Caco-2 (cell line): ENCODE measurements at regions of chr11 and their contacts with region 1.

Region 1: GRCh38 chr11:44243595-44244343 is 66.2 kb downstream of the ALX4 start:
- DNase-seq: peak; percentile 89 to 93
- H3K4me3 ChIP-seq: no peak overlapping the region
- H3K4me3 Mint-ChIP-seq: peak overlapping the region; percentile 64
- H3K27ac Mint-ChIP-seq: peak overlapping the region; percentile 91
- H3K4me1 ChIP-seq: peaks cover 45% of the 10 kb centered on the region
- H3K4me1 Mint-ChIP-seq: peaks cover 26% of the 10 kb centered on the region
- H3K27me3 ChIP-seq: no peaks in the 10 kb centered on the region
- H3K27me3 Mint-ChIP-seq: no peaks in the 10 kb centered on the region
- CTCF ChIP-seq: no peak

Region 2: GRCh38 chr11:43765194-43765593 is 478.6 kb before region 1 on chr11:
- CTCF ChIA-PET with region 1: no interaction called
- POLR2A ChIA-PET with region 1: no interaction called
- intact Hi-C with region 1: loop called (anchors 10 kb)
- DNase-seq: no peak
- H3K4me3 ChIP-seq: no peak overlapping the region
- H3K4me3 Mint-ChIP-seq: no peak overlapping the region
- H3K27ac Mint-ChIP-seq: no peak overlapping the region
- H3K4me1 ChIP-seq: no peaks in the 10 kb centered on the region
- H3K4me1 Mint-ChIP-seq: no peaks in the 10 kb centered on the region
- H3K27me3 ChIP-seq: no peaks in the 10 kb centered on the region
- H3K27me3 Mint-ChIP-seq: no peaks in the 10 kb centered on the region
- CTCF ChIP-seq: no peak

Region 3: GRCh38 chr11:44133335-44133946 is 110.3 kb before region 1 on chr11:
- CTCF ChIA-PET with region 1: interaction called, 3 read pairs
- POLR2A ChIA-PET with region 1: interaction called, 4 read pairs
- intact Hi-C with region 1: loop called (anchors 2 kb)
- DNase-seq: peak in 1 of 2 experiments; percentile 24
- H3K4me3 ChIP-seq: no peak overlapping the region
- H3K4me3 Mint-ChIP-seq: no peak overlapping the region
- H3K27ac Mint-ChIP-seq: no peak overlapping the region
- H3K4me1 ChIP-seq: peaks cover 10% of the 10 kb centered on the region; the same call in 1 of the 2 replicates
- H3K4me1 Mint-ChIP-seq: peaks cover 18% of the 10 kb centered on the region
- H3K27me3 ChIP-seq: no peaks in the 10 kb centered on the region
- H3K27me3 Mint-ChIP-seq: no peaks in the 10 kb centered on the region
- CTCF ChIP-seq: peak; percentile 69 to 85

Region 4: GRCh38 chr11:44178381-44178780 is 65.4 kb before region 1 on chr11:
- CTCF ChIA-PET with region 1: interaction called, 9 read pairs
- POLR2A ChIA-PET with region 1: no interaction called
- intact Hi-C with region 1: loop called (anchors 5 kb)
- DNase-seq: no peak
- H3K4me3 ChIP-seq: no peak overlapping the region
- H3K4me3 Mint-ChIP-seq: no peak overlapping the region
- H3K27ac Mint-ChIP-seq: no peak overlapping the region
- H3K4me1 ChIP-seq: no peaks in the 10 kb centered on the region
- H3K4me1 Mint-ChIP-seq: peaks cover 14% of the 10 kb centered on the region
- H3K27me3 ChIP-seq: no peaks in the 10 kb centered on the region
- H3K27me3 Mint-ChIP-seq: no peaks in the 10 kb centered on the region
- CTCF ChIP-seq: peak in 1 of 2 experiments; percentile 3

Region 5: GRCh38 chr11:44208976-44209603 is 34.7 kb before region 1 on chr11:
- CTCF ChIA-PET with region 1: no interaction called
- POLR2A ChIA-PET with region 1: no interaction called
- intact Hi-C with region 1: loop called (anchors 5 kb)
- DNase-seq: no peak
- H3K4me3 ChIP-seq: no peak overlapping the region
- H3K4me3 Mint-ChIP-seq: no peak overlapping the region
- H3K27ac Mint-ChIP-seq: no peak overlapping the region
- H3K4me1 ChIP-seq: no peaks in the 10 kb centered on the region
- H3K4me1 Mint-ChIP-seq: no peaks in the 10 kb centered on the region
- H3K27me3 ChIP-seq: no peaks in the 10 kb centered on the region
- H3K27me3 Mint-ChIP-seq: no peaks in the 10 kb centered on the region
- CTCF ChIP-seq: no peak

Region 6: DNA sequence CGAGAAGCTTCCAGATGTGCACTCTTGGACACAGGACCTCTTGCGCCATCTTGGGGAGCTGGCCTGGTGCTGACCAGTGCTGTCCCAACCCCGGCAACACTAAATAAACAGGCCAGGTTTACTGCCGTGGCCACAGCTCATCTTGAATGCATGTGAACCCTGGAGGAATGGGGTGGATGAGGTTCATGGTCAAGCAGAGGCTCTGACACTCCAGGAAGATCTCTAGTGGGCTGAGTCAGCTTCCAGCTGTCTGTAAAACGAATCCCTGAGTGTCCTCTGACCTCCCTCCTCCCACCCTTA is 14.4 kb after region 1 on chr11:
- CTCF ChIA-PET with region 1: interaction called, 10 read pairs
- POLR2A ChIA-PET with region 1: interaction called, 3 read pairs
- intact Hi-C with region 1: loop called (anchors 1 kb)
- DNase-seq: no peak
- H3K4me3 ChIP-seq: no peak overlapping the region
- H3K4me3 Mint-ChIP-seq: no peak overlapping the region
- H3K27ac Mint-ChIP-seq: peak overlapping the region; percentile 9
- H3K4me1 ChIP-seq: peaks cover 38% of the 10 kb centered on the region
- H3K4me1 Mint-ChIP-seq: peaks cover 23% of the 10 kb centered on the region
- H3K27me3 ChIP-seq: no peaks in the 10 kb centered on the region
- H3K27me3 Mint-ChIP-seq: no peaks in the 10 kb centered on the region
- CTCF ChIP-seq: no peak

Region 7: GRCh38 chr11:44286268-44286880 is 42.6 kb after region 1 on chr11:
- CTCF ChIA-PET with region 1: interaction called, 4 read pairs
- POLR2A ChIA-PET with region 1: no interaction called
- intact Hi-C with region 1: loop called (anchors 5 kb)
- DNase-seq: peak; percentile 56
- H3K4me3 ChIP-seq: no peak overlapping the region
- H3K4me3 Mint-ChIP-seq: no peak overlapping the region
- H3K27ac Mint-ChIP-seq: peak overlapping the region; percentile 73
- H3K4me1 ChIP-seq: peaks cover 18% of the 10 kb centered on the region
- H3K4me1 Mint-ChIP-seq: peaks cover 17% of the 10 kb centered on the region
- H3K27me3 ChIP-seq: no peaks in the 10 kb centered on the region
- H3K27me3 Mint-ChIP-seq: no peaks in the 10 kb centered on the region
- CTCF ChIP-seq: peak; percentile 92 to 93